Mammary epithelial cell (primary cell): ENCODE measurements at regions of chr1 and their contacts with region 1.

Region 1: GRCh38 chr1:151539990-151540981 is at the start of gene TUFT1:
- DNase-seq: peak; percentile 90
- H3K4me3 ChIP-seq: peak within 1 kb of the TSS; percentile 72 to 76 (median 76)
- H3K27ac ChIP-seq: peak within 1 kb of the TSS; percentile 66
- H3K4me1 ChIP-seq: peaks cover 40% of the 10 kb centered on the region
- H3K27me3 ChIP-seq: no peaks in the 10 kb centered on the region
- CTCF ChIP-seq: no peak
- total RNA-seq, gene TUFT1: 43.3 to 59.0 TPM

Region 2: DNA sequence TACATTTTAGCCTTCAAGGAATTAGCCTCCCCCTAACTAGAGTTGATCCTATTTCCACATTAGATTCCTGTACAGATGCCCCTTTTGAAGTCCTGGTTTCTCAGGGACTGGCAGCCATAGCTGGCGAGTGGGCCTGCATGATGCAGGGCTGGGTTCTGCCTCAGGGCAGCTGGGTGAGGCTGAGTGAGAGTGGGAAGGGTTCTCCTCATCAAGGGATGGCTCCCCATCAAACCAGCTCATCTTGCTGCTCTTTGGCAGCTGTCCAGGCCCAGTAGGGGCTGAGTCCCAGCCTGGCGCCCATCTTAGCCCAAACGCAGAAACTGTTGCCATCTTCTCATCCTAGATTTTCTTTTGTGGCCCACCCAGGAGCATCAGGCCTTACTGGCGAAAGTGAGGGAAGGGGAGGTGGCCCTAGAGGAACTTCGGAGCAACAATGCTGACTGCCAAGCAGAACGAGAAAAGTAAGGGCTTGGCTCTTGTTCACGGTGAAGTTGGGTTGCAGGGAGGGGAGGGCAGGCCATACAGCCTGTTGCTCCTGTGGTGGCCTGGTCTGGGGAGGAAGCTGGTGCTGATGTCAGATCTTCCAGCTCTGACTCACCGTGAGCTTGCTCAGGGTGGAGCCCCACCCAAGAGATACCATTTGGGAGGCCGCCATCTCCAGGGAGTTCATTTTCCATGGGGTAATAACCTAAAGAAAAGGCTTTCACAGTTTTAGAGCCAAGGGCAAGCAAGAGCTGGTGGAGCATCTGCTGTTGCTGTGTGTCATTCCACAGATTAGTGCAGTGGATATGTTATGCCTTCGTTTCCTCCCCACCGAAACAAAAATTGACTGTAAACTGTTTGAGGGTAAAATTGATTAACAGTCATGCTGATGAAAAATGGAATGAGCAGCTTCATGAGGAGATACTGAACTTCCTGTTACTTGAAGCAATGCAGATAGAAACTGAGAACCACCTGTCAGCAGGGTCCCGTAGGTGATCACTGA is 34.6 kb after region 1 on chr1:
- CTCF ChIA-PET with region 1: no interaction called
- dilution Hi-C with region 1: loop called (anchors 5 kb)
- in situ Hi-C with region 1: no loop called
- intact Hi-C with region 1: no loop called
- DNase-seq: peak; percentile 60
- H3K4me3 ChIP-seq: no peak overlapping the region
- H3K27ac ChIP-seq: no peak overlapping the region
- H3K4me1 ChIP-seq: peaks cover 45% of the 10 kb centered on the region
- H3K27me3 ChIP-seq: no peaks in the 10 kb centered on the region
- CTCF ChIP-seq: no peak

Region 3: DNA sequence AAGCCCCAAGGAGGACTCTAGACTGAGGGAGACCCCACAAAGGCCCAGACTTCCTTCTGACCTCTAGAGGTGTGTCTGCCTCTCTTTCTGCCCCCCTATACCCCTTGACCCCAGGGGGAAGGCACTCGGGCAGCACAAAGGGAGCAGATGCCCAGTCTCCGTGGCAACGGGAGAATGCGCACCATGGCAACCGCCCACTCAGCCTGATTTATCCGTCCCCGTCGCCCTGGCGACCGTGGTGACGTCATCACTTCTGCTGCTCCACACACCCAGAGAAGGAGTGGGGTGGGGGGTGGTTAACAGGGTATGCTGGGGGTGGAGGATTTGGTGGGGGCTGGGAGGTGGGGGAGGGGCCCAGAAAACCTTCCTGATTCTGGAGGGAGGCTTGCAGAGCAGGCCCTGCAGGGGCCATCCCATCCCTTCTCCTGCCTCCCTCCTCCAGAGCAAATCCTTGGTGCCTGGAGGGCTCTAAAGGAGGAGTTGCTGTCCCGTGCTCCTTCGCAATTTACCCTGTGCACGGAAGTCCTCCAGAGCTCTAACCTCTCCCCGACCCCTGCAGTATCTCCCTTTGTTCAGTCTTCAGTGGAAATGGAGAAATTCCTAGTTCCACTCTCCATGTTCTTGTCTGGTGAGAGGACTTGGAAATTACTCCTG is 170.0 kb after region 1 on chr1:
- CTCF ChIA-PET with region 1: no interaction called
- dilution Hi-C with region 1: loop called (anchors 10 kb)
- in situ Hi-C with region 1: no loop called
- intact Hi-C with region 1: no loop called
- DNase-seq: no peak
- H3K4me3 ChIP-seq: no peak overlapping the region
- H3K27ac ChIP-seq: no peak overlapping the region
- H3K4me1 ChIP-seq: peaks cover 11% of the 10 kb centered on the region
- H3K27me3 ChIP-seq: no peaks in the 10 kb centered on the region
- CTCF ChIP-seq: no peak

Region 4: DNA sequence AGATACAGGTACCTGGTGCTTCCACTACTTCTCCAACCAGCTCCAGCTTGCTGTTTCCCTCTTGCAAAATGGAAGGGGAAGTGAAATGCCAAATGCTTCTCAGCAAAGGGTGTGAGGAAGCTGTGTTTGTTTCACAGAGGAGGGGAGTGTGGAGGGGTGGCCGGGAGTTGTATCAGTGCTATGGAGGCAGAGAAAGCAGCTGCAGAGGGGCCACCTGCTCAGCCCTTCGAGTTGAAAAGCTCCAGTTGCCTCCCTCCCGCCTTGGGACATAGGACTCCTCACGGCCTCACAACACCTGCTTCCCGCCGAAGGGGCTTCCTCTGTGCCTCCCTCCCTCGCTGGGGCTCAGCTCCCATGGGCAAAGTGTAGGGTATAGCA is 277.1 kb after region 1 on chr1:
- CTCF ChIA-PET with region 1: no interaction called
- dilution Hi-C with region 1: no loop called
- in situ Hi-C with region 1: no loop called
- intact Hi-C with region 1: no loop called
- DNase-seq: no peak
- H3K4me3 ChIP-seq: no peak overlapping the region
- H3K27ac ChIP-seq: no peak overlapping the region
- H3K4me1 ChIP-seq: no peaks in the 10 kb centered on the region
- H3K27me3 ChIP-seq: no peaks in the 10 kb centered on the region
- CTCF ChIP-seq: no peak